IMR-90 (cell line): ENCODE measurements at regions of chr3 and their contacts with region 1.

Region 1: DNA sequence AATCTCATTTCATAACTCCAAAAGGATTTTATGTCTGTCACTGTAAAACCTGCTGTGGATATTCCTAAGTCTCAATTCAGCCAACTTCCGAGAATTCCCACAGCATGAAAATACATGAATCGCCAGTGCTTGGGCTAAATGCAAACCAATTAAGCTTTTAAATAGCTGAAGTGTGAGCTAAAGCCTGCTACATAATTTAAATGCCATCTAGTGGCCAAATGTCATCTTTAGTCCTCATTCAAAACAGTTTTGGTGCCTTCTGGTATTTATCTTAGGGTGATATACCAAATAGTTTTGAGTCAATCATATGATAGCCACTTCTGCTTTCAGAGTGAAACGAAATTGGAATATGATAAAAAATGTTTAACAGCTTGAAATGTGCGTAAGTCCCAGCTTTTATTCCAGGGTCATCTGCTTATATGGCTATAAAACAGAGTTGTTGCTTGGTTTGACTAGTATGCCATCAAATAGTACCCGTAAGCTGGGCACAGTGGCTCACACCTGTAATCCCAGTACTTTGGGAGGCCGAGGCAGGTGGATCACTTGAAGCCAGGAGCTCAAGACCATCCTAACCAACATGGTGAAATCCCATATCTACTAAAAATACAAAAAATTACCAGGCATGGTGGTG is 41.8 kb upstream of the CCNL1 start:
- DNase-seq: peak; percentile 40
- ATAC-seq: peak; percentile 62
- H3K4me3 ChIP-seq: no peak overlapping the region
- H3K27ac ChIP-seq: no peak overlapping the region
- H3K4me1 ChIP-seq: no peaks in the 10 kb centered on the region; the same call in 1 of the 2 replicates
- H3K27me3 ChIP-seq: no peaks in the 10 kb centered on the region
- CTCF ChIP-seq: peak; percentile 50
- POLR2A ChIP-seq: no peak
- RAD21 ChIP-seq: peak; percentile 48

Region 2: GRCh38 chr3:157239082-157239704 is 37.4 kb after region 1 on chr3:
- CTCF ChIA-PET with region 1: no interaction called
- POLR2A ChIA-PET with region 1: no interaction called
- dilution Hi-C with region 1: no loop called
- in situ Hi-C with region 1: no loop called
- intact Hi-C with region 1: loop called (anchors 2 kb)
- DNase-seq: peak; percentile 55
- ATAC-seq: peak; percentile 84
- H3K4me3 ChIP-seq: no peak overlapping the region
- H3K27ac ChIP-seq: no peak overlapping the region
- H3K4me1 ChIP-seq: peaks cover 2% of the 10 kb centered on the region; the same call in 1 of the 2 replicates
- H3K27me3 ChIP-seq: no peaks in the 10 kb centered on the region
- CTCF ChIP-seq: peak; percentile 60
- POLR2A ChIP-seq: no peak
- RAD21 ChIP-seq: peak; percentile 60

Region 3: DNA sequence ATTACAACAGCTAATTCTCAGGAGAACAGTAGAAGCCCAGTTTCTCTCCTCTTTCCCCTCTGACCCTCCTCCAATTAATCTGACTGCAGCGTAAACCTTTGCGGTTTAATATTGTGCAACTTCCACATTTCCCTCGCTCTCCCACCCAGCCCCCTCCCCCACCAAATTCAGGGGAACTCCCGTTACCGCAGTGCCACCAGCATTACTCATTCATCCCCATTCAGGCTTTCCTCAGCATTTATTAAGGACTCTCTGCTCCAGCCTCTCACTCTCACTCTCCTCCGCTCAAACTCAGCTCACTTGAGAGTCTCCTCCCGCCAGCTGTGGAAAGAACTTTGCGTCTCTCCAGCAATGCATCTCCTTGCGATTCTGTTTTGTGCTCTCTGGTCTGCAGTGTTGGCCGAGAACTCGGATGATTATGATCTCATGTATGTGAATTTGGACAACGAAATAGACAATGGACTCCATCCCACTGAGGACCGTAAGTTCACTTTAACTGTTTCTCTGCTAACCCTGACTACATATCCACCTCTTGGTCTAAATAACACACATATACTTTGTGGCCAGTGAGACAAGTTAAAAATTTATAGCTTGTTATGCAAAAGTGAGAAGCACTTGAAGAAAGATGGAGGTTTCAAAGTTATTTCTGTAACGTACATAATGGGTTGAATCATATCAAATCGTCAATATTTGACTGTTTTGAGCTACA is 235.0 kb after region 1 on chr3 and contains the start of gene PTX3:
- CTCF ChIA-PET with region 1: interaction called, 4 read pairs
- POLR2A ChIA-PET with region 1: interaction called, 18 read pairs
- dilution Hi-C with region 1: no loop called
- in situ Hi-C with region 1: no loop called
- intact Hi-C with region 1: loop called (anchors 2 kb)
- DNase-seq: peak; percentile 94
- ATAC-seq: peak; percentile 72
- H3K4me3 ChIP-seq: peak within 1 kb of the TSS; percentile 68
- H3K27ac ChIP-seq: peak within 1 kb of the TSS; percentile 68
- H3K4me1 ChIP-seq: peaks cover 5% of the 10 kb centered on the region; the same call in 1 of the 2 replicates
- H3K27me3 ChIP-seq: no peaks in the 10 kb centered on the region
- CTCF ChIP-seq: no peak
- POLR2A ChIP-seq: peak; percentile 75; the same call in 1 of the 2 replicates
- RAD21 ChIP-seq: peak; percentile 19; the same call in 1 of the 2 replicates
- total RNA-seq, gene PTX3: 96.7 and 97.9 TPM in 2 replicates

Region 4: GRCh38 chr3:157493627-157494550 is 292.1 kb after region 1 on chr3:
- CTCF ChIA-PET with region 1: interaction called, 4 read pairs
- POLR2A ChIA-PET with region 1: no interaction called
- dilution Hi-C with region 1: no loop called
- in situ Hi-C with region 1: loop called (anchors 5 kb)
- intact Hi-C with region 1: loop called (anchors 1 kb)
- DNase-seq: peak; percentile 71
- ATAC-seq: peak; percentile 46
- H3K4me3 ChIP-seq: no peak overlapping the region
- H3K27ac ChIP-seq: no peak overlapping the region
- H3K4me1 ChIP-seq: peaks cover 13% of the 10 kb centered on the region
- H3K27me3 ChIP-seq: no peaks in the 10 kb centered on the region
- CTCF ChIP-seq: peak; percentile 80
- POLR2A ChIP-seq: no peak
- RAD21 ChIP-seq: peak; percentile 68